Gastrocnemius medialis (tissue), 4 donors: ENCODE measurements at regions of chr10 and their contacts with region 1.

Region 1: GRCh38 chr10:103481974-103482531 is 3.0 kb upstream of the CALHM3 start:
- DNase-seq: no peak
- ATAC-seq: peak; percentile 67 to 75
- H3K4me3 ChIP-seq: no peak overlapping the region
- H3K27ac ChIP-seq: no peak overlapping the region
- H3K4me1 ChIP-seq: no peaks in the 10 kb centered on the region
- H3K27me3 ChIP-seq: no peaks in the 10 kb centered on the region
- CTCF ChIP-seq: peak; percentile 22 to 57 (median 45)
- POLR2A ChIP-seq: no peak

Region 2: DNA sequence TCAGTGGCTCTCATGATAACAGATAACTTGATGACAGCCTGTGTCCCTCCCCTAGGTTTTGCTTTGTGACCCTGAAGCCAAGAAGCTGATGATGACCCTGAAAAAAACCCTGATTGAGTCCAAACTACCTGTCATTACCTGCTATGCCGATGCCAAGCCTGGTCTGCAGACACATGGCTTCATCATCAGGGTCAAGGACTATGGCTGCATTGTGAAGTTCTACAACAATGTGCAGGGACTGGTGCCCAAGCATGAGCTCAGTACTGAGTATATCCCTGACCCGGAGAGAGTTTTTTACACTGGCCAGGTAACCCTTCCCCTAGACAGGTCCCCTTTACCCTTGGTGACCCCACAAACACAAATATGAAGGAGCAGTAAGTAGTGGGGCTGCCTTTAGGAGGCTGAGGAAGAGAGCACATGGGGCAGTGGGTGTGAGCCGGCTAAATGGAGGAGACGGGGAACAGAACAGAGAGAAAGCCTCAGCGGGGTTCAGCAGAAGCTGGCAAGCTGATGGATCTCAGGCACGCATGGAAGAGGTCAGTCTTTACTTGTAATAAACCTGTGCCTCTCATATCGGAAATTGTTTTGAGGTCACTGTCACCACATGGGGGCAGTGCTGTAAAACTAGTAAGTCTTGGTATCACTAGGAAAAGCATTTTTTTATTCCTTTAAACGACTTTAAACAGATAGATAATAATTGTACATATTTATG is 65.5 kb before region 1 on chr10:
- in situ Hi-C with region 1: loop called (anchors 5 to 10 kb)
- intact Hi-C with region 1: loop called (anchors 1 kb)
- DNase-seq: peak in 1 of 2 donors; percentile 51
- ATAC-seq: peak; percentile 33 to 60
- H3K4me3 ChIP-seq: no peak overlapping the region
- H3K27ac ChIP-seq: no peak overlapping the region
- H3K4me1 ChIP-seq: no peaks in the 10 kb centered on the region
- H3K27me3 ChIP-seq: no peaks in the 10 kb centered on the region
- CTCF ChIP-seq: peak; percentile 23 to 71 (median 58)
- POLR2A ChIP-seq: no peak

Region 3: GRCh38 chr10:103429647-103430046 is 52.4 kb before region 1 on chr10:
- in situ Hi-C with region 1: loop called in 1 of 4 experiments (anchors 10 kb)
- intact Hi-C with region 1: no loop called
- DNase-seq: no peak
- ATAC-seq: no peak
- H3K4me3 ChIP-seq: no peak overlapping the region
- H3K27ac ChIP-seq: no peak overlapping the region
- H3K4me1 ChIP-seq: peaks cover 0 to 9% of the 10 kb centered on the region in 2 donors
- H3K27me3 ChIP-seq: no peaks in the 10 kb centered on the region
- CTCF ChIP-seq: no peak
- POLR2A ChIP-seq: no peak

Region 4: DNA sequence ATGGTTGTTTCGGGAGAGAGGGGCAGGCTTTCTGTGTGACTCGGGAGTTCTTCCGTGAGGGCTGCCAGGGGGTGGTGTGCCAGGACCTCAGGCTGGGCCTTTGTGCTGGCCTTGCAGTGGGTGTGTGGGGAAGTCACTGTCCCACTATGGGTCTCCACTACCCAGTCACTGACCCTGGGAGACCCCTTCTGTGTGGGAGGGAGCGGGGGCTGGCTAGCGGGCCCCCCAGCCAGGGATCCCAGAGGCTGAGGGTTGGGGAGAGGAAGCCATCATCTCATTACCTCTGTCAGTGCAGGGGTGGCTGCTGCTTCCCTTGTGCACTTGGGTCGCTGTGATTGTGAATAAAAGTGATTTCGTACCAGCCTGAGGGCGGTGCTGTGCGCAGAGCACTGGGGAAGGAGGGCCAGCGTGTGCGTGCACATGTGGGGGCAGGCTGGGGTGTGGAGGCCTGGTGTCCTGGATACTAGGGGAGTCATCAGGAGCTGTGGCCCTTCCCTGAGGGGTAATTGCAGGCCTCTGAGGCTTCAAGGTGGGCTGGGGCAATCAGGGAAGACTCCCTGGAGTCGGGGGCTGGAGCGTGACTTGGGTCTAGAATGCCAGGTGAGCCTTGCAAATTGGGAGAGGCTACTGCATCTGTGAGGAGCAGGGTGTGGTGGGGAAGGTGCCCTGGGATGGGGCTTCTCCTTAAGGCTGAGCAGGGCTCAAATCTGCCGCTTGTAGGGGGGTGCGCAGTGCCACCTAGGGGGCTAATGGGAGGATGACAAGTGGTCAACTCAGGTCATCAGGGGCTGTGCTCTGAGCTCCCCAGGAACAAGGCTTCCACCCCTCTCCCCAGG is 110.4 kb after region 1 on chr10:
- in situ Hi-C with region 1: no loop called
- intact Hi-C with region 1: loop called (anchors 5 kb)
- DNase-seq: peak in 1 of 2 donors; percentile 50
- ATAC-seq: peak; percentile 51 to 63
- H3K4me3 ChIP-seq: no peak overlapping the region
- H3K27ac ChIP-seq: peak overlapping the region in 1 of 4 donors; percentile 22
- H3K4me1 ChIP-seq: peaks cover 9 to 13% of the 10 kb centered on the region in 2 donors
- H3K27me3 ChIP-seq: no peaks in the 10 kb centered on the region
- CTCF ChIP-seq: peak; percentile 55 to 78 (median 64)
- POLR2A ChIP-seq: no peak